ENCODE measurements at regions of chr9 and their contacts with region 1.

Region 1: GRCh38 chr9:35510745-35511428 is 21.0 kb downstream of the RUSC2 start:
- DNase-seq: peak; percentile 98
- H3K4me3 ChIP-seq: no peak overlapping the region
- CTCF ChIP-seq: peak; percentile 42

Region 2: GRCh38 chr9:35495984-35496383 is 14.9 kb before region 1 on chr9:
- CTCF ChIA-PET with region 1: interaction called, 10 read pairs
- POLR2A ChIA-PET with region 1: interaction called, 4 read pairs
- DNase-seq: no peak
- H3K4me3 ChIP-seq: no peak overlapping the region
- CTCF ChIP-seq: no peak

Region 3: GRCh38 chr9:35538361-35539234 is 27.7 kb after region 1 on chr9:
- CTCF ChIA-PET with region 1: interaction called, 7 read pairs
- POLR2A ChIA-PET with region 1: interaction called, 18 read pairs
- DNase-seq: no peak
- H3K4me3 ChIP-seq: peak overlapping the region; percentile 67
- CTCF ChIP-seq: no peak